ENCODE measurements at regions of chr9 and their contacts with region 1.

Region 1: DNA sequence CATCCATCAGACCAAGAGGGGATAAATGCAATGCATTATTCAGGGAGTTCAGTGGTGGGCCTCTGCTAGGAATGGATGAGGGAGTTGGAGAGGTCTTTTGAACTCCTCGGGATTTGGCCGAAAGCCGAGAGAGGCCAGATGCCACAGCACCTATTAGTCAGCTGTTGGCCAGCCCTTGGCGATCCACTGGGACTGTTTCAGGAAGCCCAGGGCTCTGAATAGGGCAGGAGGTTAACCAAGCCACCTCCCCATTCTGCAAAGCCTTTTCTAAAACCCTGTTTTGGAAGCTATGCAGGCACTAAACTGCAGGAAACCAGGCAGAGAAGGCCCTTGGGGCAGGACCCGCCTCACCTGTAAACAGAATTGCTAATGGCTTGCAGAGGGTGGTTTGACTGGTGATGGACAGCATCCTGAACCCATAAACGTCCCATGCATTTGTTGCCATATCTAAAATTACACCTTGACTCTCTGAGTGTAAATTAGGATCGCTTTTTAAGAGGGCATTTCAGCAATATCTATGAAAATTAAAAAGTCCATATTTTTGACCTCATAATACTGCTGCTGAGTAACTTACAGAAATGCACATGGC is 37.7 kb downstream of the ASTN2 start:
- DNase-seq: no peak
- ATAC-seq: no peak
- H3K4me3 ChIP-seq: no peak overlapping the region
- H3K27ac ChIP-seq: no peak overlapping the region
- H3K4me1 ChIP-seq: no peaks in the 10 kb centered on the region
- H3K27me3 ChIP-seq: peaks cover 0 to 6% (median 0%) of the 10 kb centered on the region in 7 donors
- CTCF ChIP-seq: no peak

Region 2: GRCh38 chr9:117278471-117279035 is 98.6 kb before region 1 on chr9:
- intact Hi-C with region 1: no loop called
- DNase-seq: no peak
- ATAC-seq: no peak
- H3K4me3 ChIP-seq: no peak overlapping the region
- H3K27ac ChIP-seq: no peak overlapping the region
- H3K4me1 ChIP-seq: no peaks in the 10 kb centered on the region
- H3K27me3 ChIP-seq: no peaks in the 10 kb centered on the region
- CTCF ChIP-seq: no peak

Region 3: GRCh38 chr9:117363006-117363405 is 14.1 kb before region 1 on chr9:
- intact Hi-C with region 1: loop called in 1 of 10 experiments (anchors 1 kb)
- DNase-seq: no peak
- ATAC-seq: no peak
- H3K4me3 ChIP-seq: no peak overlapping the region
- H3K27ac ChIP-seq: no peak overlapping the region
- H3K4me1 ChIP-seq: no peaks in the 10 kb centered on the region
- H3K27me3 ChIP-seq: peaks cover 0 to 7% (median 0%) of the 10 kb centered on the region in 7 donors
- CTCF ChIP-seq: no peak

Region 4: DNA sequence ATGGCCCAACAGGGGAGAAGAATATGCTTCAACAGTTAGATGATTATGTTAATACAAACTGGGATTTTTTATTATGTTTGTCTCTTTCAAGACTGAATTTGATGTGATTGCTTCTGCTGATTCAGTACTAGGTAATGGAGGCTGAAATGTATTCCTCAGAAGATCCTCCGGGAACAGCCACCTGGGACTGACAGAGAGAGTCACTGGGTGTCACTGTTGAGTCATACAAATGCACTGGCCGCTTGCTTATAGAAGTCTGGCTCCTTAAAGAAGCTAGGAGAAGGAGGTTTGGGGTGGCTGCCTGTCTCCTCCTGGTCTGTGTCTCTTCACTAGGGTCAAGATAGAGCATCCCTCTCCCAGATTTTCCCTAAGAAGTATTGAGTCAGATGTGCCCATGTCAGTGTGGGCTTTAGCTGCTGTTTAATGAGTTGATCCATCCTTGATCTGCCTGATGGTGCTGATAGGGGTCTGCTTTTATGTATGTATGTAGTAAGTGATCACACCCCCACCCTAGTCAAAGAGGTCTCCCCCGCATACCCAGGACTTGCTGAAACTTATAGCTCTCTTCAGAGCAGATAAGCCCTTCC is 1218.7 kb after region 1 on chr9:
- intact Hi-C with region 1: no loop called
- DNase-seq: peak in 1 of 2 donors; percentile 5
- ATAC-seq: peak in 1 of 8 donors; percentile 73
- H3K4me3 ChIP-seq: no peak overlapping the region
- H3K27ac ChIP-seq: no peak overlapping the region
- H3K4me1 ChIP-seq: no peaks in the 10 kb centered on the region
- H3K27me3 ChIP-seq: peaks cover 0 to 4% (median 0%) of the 10 kb centered on the region in 7 donors
- CTCF ChIP-seq: peak in 7 of 9 donors; percentile 17 to 51 (median 38)

Region 5: GRCh38 chr9:118652912-118653311 is 1275.8 kb after region 1 on chr9:
- intact Hi-C with region 1: no loop called
- DNase-seq: no peak
- ATAC-seq: no peak
- H3K4me3 ChIP-seq: no peak overlapping the region
- H3K27ac ChIP-seq: no peak overlapping the region
- H3K4me1 ChIP-seq: no peaks in the 10 kb centered on the region
- H3K27me3 ChIP-seq: no peaks in the 10 kb centered on the region
- CTCF ChIP-seq: no peak